ENCODE measurements at regions of chr16 and their contacts with region 1.

Region 1: GRCh38 chr16:3106205-3106928 is 6.0 kb upstream of the ZNF205 start:
- DNase-seq: peak; percentile 84
- ATAC-seq: peak; percentile 96
- H3K4me3 Mint-ChIP-seq: peak overlapping the region; percentile 79
- H3K27ac Mint-ChIP-seq: peak overlapping the region; percentile 73
- H3K4me1 Mint-ChIP-seq: peaks cover 27% of the 10 kb centered on the region
- H3K27me3 Mint-ChIP-seq: peaks cover 1% of the 10 kb centered on the region
- CTCF ChIP-seq: no peak

Region 2: DNA sequence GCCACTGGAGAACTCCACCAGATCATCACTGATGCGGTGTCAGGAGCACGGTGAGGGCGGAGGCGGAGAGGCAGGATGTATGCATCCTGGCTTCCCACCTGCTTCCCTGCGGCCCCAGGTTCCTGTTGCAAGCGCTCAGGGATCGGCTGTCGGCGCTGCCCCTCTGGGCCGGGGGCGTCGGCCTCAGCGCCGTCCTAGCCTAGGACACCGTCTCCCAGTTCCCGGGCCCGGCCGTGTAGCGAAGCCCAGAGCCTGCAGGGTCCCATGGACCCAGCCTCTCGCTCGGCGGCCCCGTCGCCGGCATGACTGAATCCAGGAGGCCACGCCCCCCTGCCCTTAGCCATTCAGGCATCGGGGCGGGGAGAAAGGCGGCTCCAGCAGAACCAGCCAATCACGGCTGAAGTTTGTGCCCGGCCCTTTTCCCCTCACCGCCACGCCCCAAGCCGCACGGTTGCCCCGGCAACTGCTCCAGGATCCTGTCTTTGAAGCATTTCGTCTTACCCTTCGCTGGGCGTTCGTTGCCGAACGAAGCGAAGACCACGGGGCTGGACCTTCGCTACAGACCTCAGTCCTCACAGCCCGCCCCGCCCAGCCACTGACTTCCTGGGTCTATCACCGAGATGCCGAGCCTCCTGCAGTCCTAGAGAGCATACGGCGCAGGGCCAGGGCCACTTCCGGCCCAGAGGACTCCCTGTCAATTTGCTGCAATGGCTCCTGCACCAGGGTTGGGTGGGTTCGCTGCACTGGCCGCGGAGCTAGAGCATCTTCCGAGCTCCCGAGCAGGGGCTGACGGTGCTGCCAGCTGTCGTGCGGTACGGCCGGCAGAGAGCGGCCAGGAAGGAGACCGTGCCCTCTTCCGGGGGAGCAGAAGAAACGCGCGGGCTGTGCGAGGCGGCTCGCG is 17.9 kb after region 1 on chr16:
- CTCF ChIA-PET with region 1: interaction called, 13 read pairs
- POLR2A ChIA-PET with region 1: interaction called, 18 read pairs
- intact Hi-C with region 1: loop called (anchors 1 kb)
- DNase-seq: peak; percentile 93
- ATAC-seq: peak; percentile 90
- H3K4me3 Mint-ChIP-seq: peak overlapping the region; percentile 98
- H3K27ac Mint-ChIP-seq: peak overlapping the region; percentile 96
- H3K4me1 Mint-ChIP-seq: peaks cover 35% of the 10 kb centered on the region
- H3K27me3 Mint-ChIP-seq: no peaks in the 10 kb centered on the region
- CTCF ChIP-seq: no peak

Measured in activated B cell treated with CpG ODN at 0.5 μM for 24 hours (primary cell).